CD4-positive, alpha-beta memory T cell (primary cell): ENCODE measurements at regions of chr1 and their contacts with region 1.

Region 1: GRCh38 chr1:156728597-156729462 is at the start of gene ISG20L2:
- DNase-seq: peak; percentile 92 to 99 (median 96)
- H3K4me3 ChIP-seq: peak within 1 kb of the TSS; percentile 96 to 99
- H3K4me3 Mint-ChIP-seq: no peak within 1 kb of the TSS
- H3K27ac ChIP-seq: peak within 1 kb of the TSS; percentile 90
- H3K27ac Mint-ChIP-seq: peak within 1 kb of the TSS in 3 of 7 donors; percentile 94 to 99 (median 98)
- H3K4me1 ChIP-seq: peaks cover 47% of the 10 kb centered on the region
- H3K4me1 Mint-ChIP-seq: peaks cover 8 to 19% (median 10%) of the 10 kb centered on the region in 4 donors
- H3K27me3 ChIP-seq: no peaks in the 10 kb centered on the region
- H3K27me3 Mint-ChIP-seq: no peaks in the 10 kb centered on the region
- total RNA-seq, gene ISG20L2: 47.9 to 53.1 TPM

Region 2: GRCh38 chr1:156572663-156573018 is 156.2 kb before region 1 on chr1:
- CTCF ChIA-PET with region 1: no interaction called
- POLR2A ChIA-PET with region 1: no interaction called
- intact Hi-C with region 1: no loop called
- DNase-seq: no peak
- H3K4me3 ChIP-seq: peak overlapping the region in 1 of 2 donors; percentile 13
- H3K4me3 Mint-ChIP-seq: peak overlapping the region; percentile 76 to 91 (median 84)
- H3K27ac ChIP-seq: no peak overlapping the region
- H3K27ac Mint-ChIP-seq: peak overlapping the region in 5 of 7 donors; percentile 4 to 80 (median 43)
- H3K4me1 ChIP-seq: peaks cover 11% of the 10 kb centered on the region
- H3K4me1 Mint-ChIP-seq: peaks cover 3 to 14% (median 11%) of the 10 kb centered on the region in 4 donors
- H3K27me3 ChIP-seq: peaks cover 9% of the 10 kb centered on the region
- H3K27me3 Mint-ChIP-seq: peaks cover 27 to 38% of the 10 kb centered on the region in 2 donors

Region 3: DNA sequence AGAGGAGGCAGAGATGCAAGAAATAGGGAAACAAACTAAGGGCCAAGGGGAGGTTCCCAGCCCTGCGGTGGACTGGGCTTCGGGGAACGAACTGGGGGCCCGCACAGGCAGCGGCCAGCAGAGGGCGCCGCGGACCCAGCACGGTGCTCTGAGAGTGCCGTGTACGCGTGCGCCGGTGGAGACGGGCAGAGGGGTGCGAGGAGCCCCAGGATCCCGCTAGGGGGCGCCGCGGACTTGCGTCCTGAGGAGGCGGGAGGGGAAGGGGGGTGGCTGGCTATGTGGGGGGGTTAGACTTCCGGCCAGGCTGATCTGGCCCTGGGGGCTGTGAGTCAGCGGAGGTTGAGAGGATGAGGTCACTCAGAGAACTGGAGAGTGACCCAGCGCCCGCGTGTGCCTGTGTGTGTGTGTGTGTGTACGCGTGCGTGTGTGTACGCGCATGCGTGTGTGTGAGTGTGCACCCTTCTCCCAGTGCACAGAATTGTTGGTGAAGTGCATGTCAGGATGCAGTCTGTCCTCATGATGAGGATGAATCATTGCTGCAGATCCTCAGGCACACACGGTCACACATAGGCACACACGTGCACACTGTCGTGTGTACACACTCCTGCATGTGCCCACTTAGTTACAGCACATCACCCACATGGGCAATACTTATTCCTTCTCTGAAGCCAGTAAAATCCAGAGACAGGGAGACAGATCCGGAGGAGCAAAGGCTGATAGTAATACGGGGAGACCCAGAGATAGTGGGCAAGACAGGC is 68.7 kb before region 1 on chr1:
- CTCF ChIA-PET with region 1: interaction called, 41 read pairs
- POLR2A ChIA-PET with region 1: interaction called, 3 read pairs
- intact Hi-C with region 1: loop called (anchors 1 kb)
- DNase-seq: peak; percentile 87 to 90 (median 88)
- H3K4me3 ChIP-seq: peak overlapping the region in 1 of 2 donors; percentile 9
- H3K4me3 Mint-ChIP-seq: peak overlapping the region; percentile 45 to 74 (median 60)
- H3K27ac ChIP-seq: no peak overlapping the region
- H3K27ac Mint-ChIP-seq: peak overlapping the region in 6 of 7 donors; percentile 69 to 90 (median 84)
- H3K4me1 ChIP-seq: peaks cover 64% of the 10 kb centered on the region
- H3K4me1 Mint-ChIP-seq: peaks cover 30 to 69% (median 46%) of the 10 kb centered on the region in 4 donors
- H3K27me3 ChIP-seq: peaks cover 10% of the 10 kb centered on the region
- H3K27me3 Mint-ChIP-seq: peaks cover 18 to 22% of the 10 kb centered on the region in 2 donors

Region 4: GRCh38 chr1:156705918-156706656 is 22.7 kb before region 1 on chr1:
- CTCF ChIA-PET with region 1: interaction called, 63 read pairs
- POLR2A ChIA-PET with region 1: interaction called, 23 read pairs
- intact Hi-C with region 1: loop called (anchors 1 kb)
- DNase-seq: peak; percentile 67 to 72 (median 70)
- H3K4me3 ChIP-seq: peak overlapping the region; percentile 63 to 65
- H3K4me3 Mint-ChIP-seq: peak overlapping the region; percentile 88 to 96 (median 89)
- H3K27ac ChIP-seq: peak overlapping the region; percentile 63
- H3K27ac Mint-ChIP-seq: peak overlapping the region; percentile 84 to 94 (median 93)
- H3K4me1 ChIP-seq: peaks cover 32% of the 10 kb centered on the region
- H3K4me1 Mint-ChIP-seq: peaks cover 8 to 47% (median 24%) of the 10 kb centered on the region in 4 donors
- H3K27me3 ChIP-seq: peaks cover 6% of the 10 kb centered on the region
- H3K27me3 Mint-ChIP-seq: peaks cover 6 to 9% of the 10 kb centered on the region in 2 donors

Region 5: GRCh38 chr1:156751758-156752757 is 23.2 kb after region 1 on chr1:
- CTCF ChIA-PET with region 1: interaction called, 34 read pairs
- POLR2A ChIA-PET with region 1: interaction called, 65 read pairs
- intact Hi-C with region 1: loop called (anchors 1 kb)
- DNase-seq: peak; percentile 91 to 98 (median 93)
- H3K4me3 ChIP-seq: peak overlapping the region; percentile 42 to 88
- H3K4me3 Mint-ChIP-seq: peak overlapping the region; percentile 87 to 97 (median 92)
- H3K27ac ChIP-seq: peak overlapping the region; percentile 82
- H3K27ac Mint-ChIP-seq: peak overlapping the region; percentile 84 to 95 (median 92)
- H3K4me1 ChIP-seq: peaks cover 43% of the 10 kb centered on the region
- H3K4me1 Mint-ChIP-seq: peaks cover 36 to 61% (median 46%) of the 10 kb centered on the region in 4 donors
- H3K27me3 ChIP-seq: no peaks in the 10 kb centered on the region
- H3K27me3 Mint-ChIP-seq: no peaks in the 10 kb centered on the region

Region 6: GRCh38 chr1:156813750-156814570 is 85.1 kb after region 1 on chr1:
- CTCF ChIA-PET with region 1: interaction called, 3 read pairs
- POLR2A ChIA-PET with region 1: interaction called, 20 read pairs
- intact Hi-C with region 1: loop called (anchors 1 kb)
- DNase-seq: peak; percentile 79 to 91 (median 83)
- H3K4me3 ChIP-seq: peak overlapping the region; percentile 73 to 97
- H3K4me3 Mint-ChIP-seq: peak overlapping the region; percentile 92 to 95 (median 94)
- H3K27ac ChIP-seq: peak overlapping the region; percentile 100
- H3K27ac Mint-ChIP-seq: peak overlapping the region; percentile 99 to 100 (median 100)
- H3K4me1 ChIP-seq: peaks cover 80% of the 10 kb centered on the region
- H3K4me1 Mint-ChIP-seq: peaks cover 47 to 78% (median 63%) of the 10 kb centered on the region in 4 donors
- H3K27me3 ChIP-seq: no peaks in the 10 kb centered on the region
- H3K27me3 Mint-ChIP-seq: peaks cover 0 to 5% of the 10 kb centered on the region in 2 donors

Region 7: DNA sequence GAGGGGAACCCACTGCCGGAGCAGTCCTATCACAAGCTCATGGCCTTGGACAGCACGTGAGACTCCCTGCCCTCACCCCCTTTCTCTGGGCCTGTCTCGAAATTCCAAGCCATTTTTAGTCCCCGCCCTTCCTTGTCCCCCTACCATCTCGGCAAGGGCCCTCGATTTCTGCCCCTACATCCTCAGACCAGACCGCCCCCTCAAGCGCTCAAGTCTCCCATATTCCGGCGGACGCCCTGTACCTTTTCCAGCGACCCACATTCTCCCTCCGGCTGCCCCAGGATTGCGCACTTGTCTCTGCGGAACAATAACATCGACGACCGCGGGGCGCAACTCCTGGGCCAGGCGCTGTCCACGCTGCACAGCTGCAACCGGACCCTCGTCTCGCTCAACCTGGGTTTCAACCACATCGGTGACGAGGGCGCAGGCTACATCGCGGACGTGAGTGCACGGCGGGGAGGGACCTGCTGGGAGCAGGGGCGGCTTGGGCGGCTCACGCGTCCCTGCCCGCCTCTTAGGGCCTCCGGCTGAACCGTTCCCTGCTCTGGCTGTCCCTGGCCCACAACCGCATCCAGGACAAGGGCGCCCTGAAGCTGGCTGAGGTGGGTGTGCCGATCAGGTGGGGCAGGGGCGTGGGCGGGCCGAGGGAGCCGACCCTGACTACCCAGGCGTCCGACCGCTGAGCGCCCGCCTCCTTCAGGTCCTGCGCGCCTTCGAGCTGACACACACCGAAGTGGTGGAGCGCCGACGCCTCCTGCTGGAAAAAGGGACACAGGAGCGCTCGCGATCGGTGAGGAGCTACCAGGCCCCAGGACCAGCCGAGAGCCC is 198.6 kb after region 1 on chr1:
- CTCF ChIA-PET with region 1: interaction called, 16 read pairs
- POLR2A ChIA-PET with region 1: no interaction called
- intact Hi-C with region 1: no loop called
- DNase-seq: peak; percentile 46 to 57 (median 55)
- H3K4me3 ChIP-seq: no peak overlapping the region
- H3K4me3 Mint-ChIP-seq: peak overlapping the region in 3 of 8 donors; percentile 27 to 62 (median 40)
- H3K27ac ChIP-seq: no peak overlapping the region
- H3K27ac Mint-ChIP-seq: no peak overlapping the region
- H3K4me1 ChIP-seq: peaks cover 21% of the 10 kb centered on the region
- H3K4me1 Mint-ChIP-seq: peaks cover 9 to 39% (median 18%) of the 10 kb centered on the region in 4 donors
- H3K27me3 ChIP-seq: peaks cover 48% of the 10 kb centered on the region
- H3K27me3 Mint-ChIP-seq: peaks cover 47 to 62% of the 10 kb centered on the region in 2 donors